Activated CD4-positive, alpha-beta memory T cell treated with anti-CD3 and anti-CD28 coated beads for 36 hours (primary cell): ENCODE measurements at regions of chr2 and their contacts with region 1.

Region 1: GRCh38 chr2:165401285-165401852 is 68.1 kb upstream of the CSRNP3 start:
- DNase-seq: no peak
- H3K4me3 Mint-ChIP-seq: no peak overlapping the region
- H3K27ac Mint-ChIP-seq: no peak overlapping the region
- H3K4me1 Mint-ChIP-seq: no peaks in the 10 kb centered on the region
- H3K27me3 Mint-ChIP-seq: peaks cover 8% of the 10 kb centered on the region

Region 2: DNA sequence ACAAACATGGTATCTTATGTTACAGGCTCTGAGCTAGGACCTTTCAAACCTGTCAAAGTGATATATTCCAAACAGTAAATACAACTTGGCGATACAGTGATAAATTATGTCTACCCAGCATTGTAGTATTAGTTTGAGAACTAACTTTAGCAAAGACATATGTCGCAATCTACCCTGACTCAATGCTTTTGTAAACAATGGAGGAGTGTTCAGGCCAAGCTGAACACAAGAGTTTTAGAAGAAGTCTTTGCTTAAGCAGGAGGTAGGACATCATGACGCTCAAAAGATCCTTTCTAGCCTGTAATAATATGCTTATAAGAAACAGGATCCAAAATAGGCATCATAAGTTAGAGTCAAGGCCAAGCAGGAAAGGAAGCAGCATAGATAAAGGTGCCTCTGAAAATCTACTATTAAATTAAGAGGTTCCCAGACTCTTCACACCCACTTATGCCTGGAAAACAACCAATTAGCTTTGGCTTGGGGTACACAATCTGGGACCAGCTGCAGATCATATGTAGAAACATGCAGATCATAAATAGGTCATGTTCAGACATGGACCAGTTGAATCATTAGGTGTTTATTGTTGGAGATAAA is 200.7 kb after region 1 on chr2:
- CTCF ChIA-PET with region 1: no interaction called
- POLR2A ChIA-PET with region 1: no interaction called
- intact Hi-C with region 1: no loop called
- DNase-seq: no peak
- H3K4me3 Mint-ChIP-seq: no peak overlapping the region
- H3K27ac Mint-ChIP-seq: no peak overlapping the region
- H3K4me1 Mint-ChIP-seq: no peaks in the 10 kb centered on the region
- H3K27me3 Mint-ChIP-seq: no peaks in the 10 kb centered on the region

Region 3: GRCh38 chr2:165698444-165698894 is 297.1 kb after region 1 on chr2:
- CTCF ChIA-PET with region 1: interaction called, 5 read pairs
- POLR2A ChIA-PET with region 1: no interaction called
- intact Hi-C with region 1: loop called (anchors 5 kb)
- DNase-seq: no peak
- H3K4me3 Mint-ChIP-seq: no peak overlapping the region
- H3K27ac Mint-ChIP-seq: no peak overlapping the region
- H3K4me1 Mint-ChIP-seq: no peaks in the 10 kb centered on the region
- H3K27me3 Mint-ChIP-seq: peaks cover 9% of the 10 kb centered on the region

Region 4: GRCh38 chr2:165778653-165779451 is 377.5 kb after region 1 on chr2:
- CTCF ChIA-PET with region 1: no interaction called
- POLR2A ChIA-PET with region 1: no interaction called
- intact Hi-C with region 1: loop called (anchors 5 kb)
- DNase-seq: no peak
- H3K4me3 Mint-ChIP-seq: no peak overlapping the region
- H3K27ac Mint-ChIP-seq: no peak overlapping the region
- H3K4me1 Mint-ChIP-seq: peaks cover 6% of the 10 kb centered on the region
- H3K27me3 Mint-ChIP-seq: no peaks in the 10 kb centered on the region

Region 5: DNA sequence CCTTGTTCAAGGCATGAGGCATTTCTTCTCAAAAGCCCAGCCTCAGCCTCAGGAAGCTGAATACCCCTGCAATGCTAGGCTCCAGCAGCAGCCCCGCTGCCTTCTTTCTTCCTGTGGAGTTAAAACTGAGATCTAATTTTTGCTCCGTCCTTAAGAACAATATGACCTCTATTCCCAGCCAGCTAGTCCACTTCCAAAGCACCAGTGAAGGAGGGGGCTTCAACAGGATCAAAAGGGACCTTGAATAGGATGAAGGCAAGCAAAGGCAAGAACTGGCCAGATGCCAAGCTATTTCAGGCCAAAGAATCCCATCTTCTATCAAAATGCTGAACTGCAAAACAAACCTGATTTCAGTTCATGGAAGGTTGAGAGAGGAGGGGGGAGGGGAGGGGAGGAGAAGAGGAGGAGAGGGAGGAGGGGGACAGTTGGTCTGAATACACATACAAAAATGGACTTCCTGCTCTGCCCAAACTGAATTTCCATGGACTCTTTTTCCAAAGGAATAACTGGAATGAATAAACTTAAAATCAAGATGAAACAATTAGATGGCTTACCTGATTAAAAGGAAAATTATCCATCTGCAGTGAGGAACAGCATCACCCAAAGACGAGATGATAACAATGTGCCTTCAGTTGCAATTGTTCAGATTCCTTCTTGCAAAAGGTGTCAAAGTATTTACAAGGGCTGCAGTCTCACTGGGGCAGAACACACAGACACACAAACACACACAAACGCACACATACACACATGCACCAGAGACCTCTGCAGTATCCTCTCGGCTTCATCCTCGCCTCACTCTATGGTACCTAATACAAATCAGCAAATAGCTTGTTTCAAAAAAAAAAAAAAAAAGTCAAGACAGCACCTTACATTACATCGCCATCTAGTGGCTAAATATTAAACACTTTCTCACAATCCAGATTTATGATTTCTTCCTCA is 726.1 kb after region 1 on chr2 and contains the start of gene SCN1A:
- CTCF ChIA-PET with region 1: interaction called, 3 read pairs
- POLR2A ChIA-PET with region 1: no interaction called
- intact Hi-C with region 1: loop called (anchors 1 kb)
- DNase-seq: no peak
- H3K4me3 Mint-ChIP-seq: no peak within 1 kb of the TSS
- H3K27ac Mint-ChIP-seq: no peak within 1 kb of the TSS
- H3K4me1 Mint-ChIP-seq: peaks cover 4% of the 10 kb centered on the region
- H3K27me3 Mint-ChIP-seq: peaks cover 10% of the 10 kb centered on the region
- total RNA-seq, gene SCN1A: not detected